Activated CD4-positive, alpha-beta T cell treated with anti-CD3 and anti-CD28 coated beads for 36 hours (primary cell): ENCODE measurements at regions of chr2 and their contacts with region 1.

Region 1: GRCh38 chr2:181891966-181892798 is 652 bp downstream of the ITPRID2 start:
- DNase-seq: peak; percentile 78
- ATAC-seq: peak; percentile 70
- H3K4me3 Mint-ChIP-seq: peak overlapping the region; percentile 87
- H3K27ac Mint-ChIP-seq: peak overlapping the region; percentile 79
- H3K4me1 Mint-ChIP-seq: peaks cover 35% of the 10 kb centered on the region
- H3K27me3 Mint-ChIP-seq: peaks cover 6% of the 10 kb centered on the region

Region 2: GRCh38 chr2:180006781-180007579 is 1885.2 kb before region 1 on chr2 and contains the start of gene CWC22:
- CTCF ChIA-PET with region 1: no interaction called
- POLR2A ChIA-PET with region 1: no interaction called
- intact Hi-C with region 1: loop called in 1 of 2 experiments (anchors 5 kb)
- DNase-seq: peak; percentile 91
- ATAC-seq: peak; percentile 98
- H3K4me3 Mint-ChIP-seq: peak within 1 kb of the TSS; percentile 92
- H3K27ac Mint-ChIP-seq: peak within 1 kb of the TSS; percentile 99
- H3K4me1 Mint-ChIP-seq: peaks cover 38% of the 10 kb centered on the region
- H3K27me3 Mint-ChIP-seq: no peaks in the 10 kb centered on the region
- total RNA-seq, gene CWC22: 25.3 to 31.0 TPM

Region 3: DNA sequence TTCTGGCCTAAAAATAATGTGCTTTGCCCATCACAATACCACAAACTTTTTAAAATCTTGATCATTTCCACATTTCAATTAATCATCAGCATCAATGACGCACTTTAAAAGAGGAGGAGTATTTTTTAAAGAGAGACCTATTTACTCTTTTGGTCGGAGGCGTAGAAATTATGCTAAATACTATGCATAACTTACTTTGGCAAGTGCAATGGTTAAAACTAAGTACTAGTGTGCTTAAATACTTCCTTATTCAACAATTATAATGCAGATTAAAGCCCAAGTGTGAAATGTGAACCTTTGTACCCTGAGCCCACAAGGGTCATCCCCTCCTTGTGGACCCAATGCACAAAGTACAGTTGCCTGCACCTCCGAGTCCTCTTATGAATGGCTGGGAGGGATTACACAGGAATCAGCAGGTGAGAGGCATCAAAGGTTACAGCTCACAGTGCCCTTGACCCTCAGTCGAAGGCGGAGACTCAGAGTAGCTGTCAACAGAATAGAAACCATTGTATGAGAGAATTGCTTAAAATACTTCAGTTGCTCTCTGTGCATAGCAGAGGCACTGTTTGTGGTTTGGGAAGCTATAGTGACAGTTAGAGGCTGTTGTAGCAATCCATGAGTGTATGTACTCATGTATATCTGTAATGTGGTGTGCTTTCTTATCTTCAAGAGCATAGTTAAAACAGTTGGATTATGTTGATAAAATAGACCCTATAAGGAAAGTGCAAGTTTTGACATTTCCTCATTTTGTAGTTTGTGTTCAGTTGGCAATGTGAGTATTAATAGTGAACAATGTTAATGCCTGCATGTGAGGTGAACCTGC is 586.7 kb before region 1 on chr2:
- CTCF ChIA-PET with region 1: no interaction called
- POLR2A ChIA-PET with region 1: no interaction called
- intact Hi-C with region 1: loop called in 1 of 2 experiments (anchors 10 kb)
- DNase-seq: peak; percentile 63
- ATAC-seq: peak; percentile 84
- H3K4me3 Mint-ChIP-seq: peak overlapping the region; percentile 60
- H3K27ac Mint-ChIP-seq: peak overlapping the region; percentile 91
- H3K4me1 Mint-ChIP-seq: peaks cover 74% of the 10 kb centered on the region
- H3K27me3 Mint-ChIP-seq: no peaks in the 10 kb centered on the region

Region 4: GRCh38 chr2:181419129-181419855 is 472.9 kb before region 1 on chr2:
- CTCF ChIA-PET with region 1: no interaction called
- POLR2A ChIA-PET with region 1: no interaction called
- intact Hi-C with region 1: no loop called
- DNase-seq: no peak
- ATAC-seq: no peak
- H3K4me3 Mint-ChIP-seq: no peak overlapping the region
- H3K27ac Mint-ChIP-seq: no peak overlapping the region
- H3K4me1 Mint-ChIP-seq: peaks cover 20% of the 10 kb centered on the region
- H3K27me3 Mint-ChIP-seq: no peaks in the 10 kb centered on the region

Region 5: GRCh38 chr2:181672255-181673008 is 219.8 kb before region 1 on chr2:
- CTCF ChIA-PET with region 1: no interaction called
- POLR2A ChIA-PET with region 1: no interaction called
- intact Hi-C with region 1: no loop called
- DNase-seq: no peak
- ATAC-seq: peak; percentile 69
- H3K4me3 Mint-ChIP-seq: no peak overlapping the region
- H3K27ac Mint-ChIP-seq: no peak overlapping the region
- H3K4me1 Mint-ChIP-seq: peaks cover 8% of the 10 kb centered on the region
- H3K27me3 Mint-ChIP-seq: peaks cover 30% of the 10 kb centered on the region

Region 6: DNA sequence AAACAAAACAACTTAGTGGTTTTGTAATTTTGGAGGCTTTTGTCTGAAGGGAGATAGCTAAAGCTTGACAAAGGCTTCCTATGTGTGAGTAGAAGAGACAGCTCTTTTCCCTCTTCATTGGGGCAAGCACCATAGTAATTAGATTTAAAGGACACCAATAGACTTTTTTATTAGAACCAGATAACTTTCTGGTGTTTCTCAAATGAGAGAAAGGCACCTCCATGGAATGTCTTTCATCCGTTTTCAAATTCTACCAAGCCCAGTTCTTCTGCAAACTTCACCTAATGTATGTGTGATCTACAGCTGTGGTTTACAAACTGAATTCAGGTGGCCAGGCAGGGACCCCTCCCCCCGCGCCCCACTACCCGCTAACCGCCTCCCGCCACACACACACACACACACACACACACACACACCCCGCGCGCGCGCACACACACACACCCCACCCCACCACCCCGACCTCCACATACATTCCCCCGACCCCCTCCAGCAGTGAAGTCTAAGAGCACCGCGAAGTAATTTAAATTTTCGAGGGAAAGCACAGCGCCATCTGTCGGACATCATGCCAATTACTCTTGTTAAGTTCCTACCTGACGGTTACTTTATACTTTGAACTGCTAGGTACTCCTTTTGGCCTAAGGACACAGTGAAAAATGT is 61.8 kb after region 1 on chr2:
- CTCF ChIA-PET with region 1: interaction called, 8 read pairs
- POLR2A ChIA-PET with region 1: no interaction called
- intact Hi-C with region 1: loop called in 1 of 2 experiments (anchors 2 kb)
- DNase-seq: peak; percentile 80
- ATAC-seq: peak; percentile 60
- H3K4me3 Mint-ChIP-seq: peak overlapping the region; percentile 1
- H3K27ac Mint-ChIP-seq: no peak overlapping the region
- H3K4me1 Mint-ChIP-seq: peaks cover 19% of the 10 kb centered on the region
- H3K27me3 Mint-ChIP-seq: peaks cover 8% of the 10 kb centered on the region

Region 7: GRCh38 chr2:182726473-182726872 is 834.3 kb after region 1 on chr2:
- CTCF ChIA-PET with region 1: no interaction called
- POLR2A ChIA-PET with region 1: no interaction called
- intact Hi-C with region 1: no loop called
- DNase-seq: peak; percentile 10
- ATAC-seq: peak; percentile 26
- H3K4me3 Mint-ChIP-seq: no peak overlapping the region
- H3K27ac Mint-ChIP-seq: no peak overlapping the region
- H3K4me1 Mint-ChIP-seq: no peaks in the 10 kb centered on the region
- H3K27me3 Mint-ChIP-seq: no peaks in the 10 kb centered on the region

Region 8: DNA sequence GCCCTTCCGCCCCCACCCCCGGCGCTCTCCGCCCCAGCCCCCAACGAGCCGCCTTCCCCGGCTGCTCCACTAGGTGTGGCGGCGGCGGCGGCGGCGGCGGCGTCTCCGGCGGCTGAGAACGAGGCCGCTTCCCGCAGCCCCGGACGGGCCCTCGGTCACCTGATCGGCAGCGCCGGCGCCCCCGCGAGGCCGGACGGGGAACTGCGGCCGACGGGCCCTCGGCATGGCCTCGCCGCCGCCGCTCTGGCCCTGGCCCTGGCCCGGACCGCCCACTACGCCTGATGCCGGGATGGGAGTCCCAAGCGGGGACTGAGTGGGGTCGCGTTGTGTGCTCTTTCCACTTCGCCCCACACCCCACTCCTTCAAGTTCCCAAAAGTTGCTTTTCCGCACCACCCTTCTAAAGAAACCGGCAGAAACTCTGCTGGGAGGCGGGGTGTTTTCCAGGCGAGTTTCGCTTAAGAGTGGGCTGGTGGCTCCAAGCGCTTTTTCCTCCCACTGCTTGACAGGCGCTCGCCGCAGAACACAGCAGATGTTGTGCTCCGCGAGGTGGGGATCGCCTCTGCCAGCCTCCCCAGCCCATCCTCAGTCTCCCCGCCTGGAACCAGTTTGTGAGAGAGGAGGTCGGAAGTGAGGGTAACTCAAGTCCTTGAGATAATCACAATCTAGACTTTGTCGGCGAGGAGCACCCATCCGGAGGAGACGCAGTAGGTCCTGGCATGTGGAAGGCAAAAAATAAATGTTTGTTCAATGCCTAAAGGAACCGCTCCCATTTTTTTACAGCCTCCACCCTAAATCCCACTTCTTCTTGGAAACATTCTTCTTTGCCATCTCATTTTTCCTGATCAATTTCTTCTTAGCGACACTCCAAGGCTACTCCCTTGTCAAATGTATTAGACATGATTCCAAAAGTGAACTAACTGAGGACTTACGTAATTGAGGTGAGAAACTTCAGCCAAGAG is 1146.4 kb after region 1 on chr2 and contains the start of gene NCKAP1:
- CTCF ChIA-PET with region 1: no interaction called
- POLR2A ChIA-PET with region 1: no interaction called
- intact Hi-C with region 1: loop called in 1 of 2 experiments (anchors 5 kb)
- DNase-seq: peak; percentile 94
- ATAC-seq: peak; percentile 90
- H3K4me3 Mint-ChIP-seq: peak within 1 kb of the TSS; percentile 76
- H3K27ac Mint-ChIP-seq: peak within 1 kb of the TSS; percentile 63
- H3K4me1 Mint-ChIP-seq: peaks cover 26% of the 10 kb centered on the region
- H3K27me3 Mint-ChIP-seq: peaks cover 42% of the 10 kb centered on the region
- total RNA-seq, gene NCKAP1: 9.1 to 11.7 TPM